CD14-positive monocyte (primary cell): ENCODE measurements at regions of chr1 and their contacts with region 1.

Region 1: DNA sequence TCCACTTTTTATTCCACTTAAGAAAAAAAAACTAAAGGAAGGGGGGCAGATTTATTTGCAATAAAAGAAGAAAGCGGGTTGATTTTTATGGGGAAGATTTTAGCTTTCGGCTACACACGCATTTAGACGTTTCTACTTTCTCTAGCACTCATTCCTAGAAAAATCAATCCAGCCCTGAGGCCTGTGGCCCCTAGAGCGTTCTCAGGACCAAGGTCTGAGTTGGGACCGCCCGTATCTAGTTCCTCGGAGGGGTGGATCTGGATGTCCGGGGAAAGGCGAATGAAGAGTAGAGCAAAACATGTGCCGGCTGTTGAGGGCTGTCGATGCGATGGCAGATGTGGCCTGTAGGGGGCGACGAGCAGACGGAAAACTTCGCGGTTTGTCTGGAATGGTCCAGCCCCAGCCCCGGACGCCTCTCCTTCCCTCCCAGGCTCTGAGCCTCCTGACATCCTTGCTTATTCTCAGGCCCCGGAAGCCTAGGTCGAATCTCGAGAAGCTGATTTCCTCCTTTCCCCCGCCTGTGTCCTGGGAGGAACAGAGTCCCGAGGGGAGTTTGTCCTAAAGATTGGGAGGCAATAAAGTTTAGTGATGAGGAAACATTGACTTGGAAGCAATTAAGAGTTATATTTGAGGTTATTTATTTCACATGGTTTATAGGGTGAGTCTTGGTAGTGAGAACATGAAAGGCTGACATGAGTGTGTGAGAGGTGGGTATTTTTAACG is 5.2 kb downstream of the FOXD3 start:
- DNase-seq: peak; percentile 57 to 67 (median 62)
- H3K4me3 ChIP-seq: no peak overlapping the region
- H3K4me3 Mint-ChIP-seq: peak overlapping the region in 1 of 2 donors; percentile 92
- H3K27ac ChIP-seq: no peak overlapping the region
- H3K27ac Mint-ChIP-seq: no peak overlapping the region
- H3K4me1 ChIP-seq: peaks cover 26 to 41% of the 10 kb centered on the region in 2 donors
- H3K4me1 Mint-ChIP-seq: peaks cover 45% of the 10 kb centered on the region
- H3K27me3 ChIP-seq: peaks cover 88 to 93% of the 10 kb centered on the region in 2 donors
- H3K27me3 Mint-ChIP-seq: peaks cover 89 to 95% (median 91%) of the 10 kb centered on the region in 3 donors
- CTCF ChIP-seq: peak; percentile 91

Region 2: DNA sequence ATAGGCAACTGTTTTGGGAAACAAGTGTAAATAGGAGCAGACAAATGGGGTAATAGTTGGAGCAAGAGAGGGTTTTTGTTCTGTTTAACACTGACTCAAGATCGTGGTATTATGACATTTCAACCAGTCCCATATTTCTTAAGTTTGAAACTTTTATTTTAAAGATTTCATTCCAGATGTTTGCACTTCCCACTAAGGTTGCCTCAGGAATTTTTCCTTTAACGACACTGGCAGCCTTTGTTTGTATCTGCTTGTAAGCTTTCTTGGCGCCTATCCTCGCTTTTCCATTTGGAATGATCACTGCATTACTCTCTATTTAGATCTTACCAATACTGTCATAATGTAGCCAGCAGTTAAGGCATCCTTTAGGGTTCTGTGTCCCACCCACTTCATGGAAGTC is 107.6 kb after region 1 on chr1:
- intact Hi-C with region 1: loop called (anchors 5 to 10 kb)
- DNase-seq: no peak
- H3K4me3 ChIP-seq: no peak overlapping the region
- H3K4me3 Mint-ChIP-seq: no peak overlapping the region
- H3K27ac ChIP-seq: no peak overlapping the region
- H3K27ac Mint-ChIP-seq: no peak overlapping the region
- H3K4me1 ChIP-seq: no peaks in the 10 kb centered on the region
- H3K4me1 Mint-ChIP-seq: no peaks in the 10 kb centered on the region
- H3K27me3 ChIP-seq: no peaks in the 10 kb centered on the region
- H3K27me3 Mint-ChIP-seq: no peaks in the 10 kb centered on the region
- CTCF ChIP-seq: no peak